ENCODE measurements at regions of chr4 and their contacts with region 1.

Region 1: GRCh38 chr4:183261953-183262775 is 57.9 kb downstream of the CLDN22 start:
- DNase-seq: no peak
- ATAC-seq: peak; percentile 73
- H3K4me3 Mint-ChIP-seq: no peak overlapping the region
- H3K27ac Mint-ChIP-seq: no peak overlapping the region
- H3K4me1 Mint-ChIP-seq: no peaks in the 10 kb centered on the region
- H3K27me3 Mint-ChIP-seq: peaks cover 6% of the 10 kb centered on the region
- CTCF ChIP-seq: peak; percentile 78

Region 2: GRCh38 chr4:182478475-182478874 is 783.7 kb before region 1 on chr4:
- CTCF ChIA-PET with region 1: interaction called, 3 read pairs
- POLR2A ChIA-PET with region 1: no interaction called
- intact Hi-C with region 1: loop called (anchors 1 kb)
- DNase-seq: no peak
- ATAC-seq: peak; percentile 50
- H3K4me3 Mint-ChIP-seq: no peak overlapping the region
- H3K27ac Mint-ChIP-seq: no peak overlapping the region
- H3K4me1 Mint-ChIP-seq: no peaks in the 10 kb centered on the region
- H3K27me3 Mint-ChIP-seq: peaks cover 4% of the 10 kb centered on the region
- CTCF ChIP-seq: peak; percentile 12

Region 3: GRCh38 chr4:182938205-182938645 is 323.9 kb before region 1 on chr4:
- CTCF ChIA-PET with region 1: interaction called, 29 read pairs
- POLR2A ChIA-PET with region 1: no interaction called
- intact Hi-C with region 1: loop called (anchors 1 kb)
- DNase-seq: peak; percentile 49
- ATAC-seq: peak; percentile 95
- H3K4me3 Mint-ChIP-seq: no peak overlapping the region
- H3K27ac Mint-ChIP-seq: no peak overlapping the region
- H3K4me1 Mint-ChIP-seq: peaks cover 5% of the 10 kb centered on the region
- H3K27me3 Mint-ChIP-seq: peaks cover 14% of the 10 kb centered on the region
- CTCF ChIP-seq: no peak

Region 4: DNA sequence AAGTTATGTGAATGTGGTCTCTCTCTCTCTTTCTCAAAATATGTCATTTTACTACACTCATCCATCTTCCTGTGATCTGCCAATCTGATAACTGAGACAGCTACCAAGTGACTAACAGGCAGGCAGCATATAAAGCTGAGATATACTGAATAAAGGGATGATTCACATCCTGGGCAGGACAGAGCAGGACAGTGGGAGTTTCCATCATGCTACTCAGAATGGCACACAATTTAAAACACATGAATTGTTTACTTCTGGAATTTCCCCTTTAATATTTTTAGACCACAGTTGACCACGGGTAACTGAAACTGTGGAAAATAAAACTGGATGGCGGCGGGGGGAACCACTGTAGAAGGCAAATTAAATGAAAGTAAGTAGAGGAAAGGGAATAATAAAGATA is 286.4 kb before region 1 on chr4:
- CTCF ChIA-PET with region 1: no interaction called
- POLR2A ChIA-PET with region 1: no interaction called
- intact Hi-C with region 1: no loop called
- DNase-seq: no peak
- ATAC-seq: no peak
- H3K4me3 Mint-ChIP-seq: no peak overlapping the region
- H3K27ac Mint-ChIP-seq: no peak overlapping the region
- H3K4me1 Mint-ChIP-seq: peaks cover 6% of the 10 kb centered on the region
- H3K27me3 Mint-ChIP-seq: peaks cover 2% of the 10 kb centered on the region
- CTCF ChIP-seq: no peak

Region 5: GRCh38 chr4:183074296-183074990 is 187.7 kb before region 1 on chr4:
- CTCF ChIA-PET with region 1: interaction called, 23 read pairs
- POLR2A ChIA-PET with region 1: no interaction called
- intact Hi-C with region 1: loop called (anchors 1 kb)
- DNase-seq: no peak
- ATAC-seq: no peak
- H3K4me3 Mint-ChIP-seq: no peak overlapping the region
- H3K27ac Mint-ChIP-seq: no peak overlapping the region
- H3K4me1 Mint-ChIP-seq: no peaks in the 10 kb centered on the region
- H3K27me3 Mint-ChIP-seq: peaks cover 7% of the 10 kb centered on the region
- CTCF ChIP-seq: no peak

Region 6: GRCh38 chr4:183398227-183399125 is 136.3 kb after region 1 on chr4:
- CTCF ChIA-PET with region 1: no interaction called
- POLR2A ChIA-PET with region 1: no interaction called
- intact Hi-C with region 1: loop called (anchors 2 kb)
- DNase-seq: peak; percentile 57
- ATAC-seq: peak; percentile 89
- H3K4me3 Mint-ChIP-seq: peak overlapping the region; percentile 82
- H3K27ac Mint-ChIP-seq: peak overlapping the region; percentile 82
- H3K4me1 Mint-ChIP-seq: peaks cover 25% of the 10 kb centered on the region
- H3K27me3 Mint-ChIP-seq: peaks cover 7% of the 10 kb centered on the region
- CTCF ChIP-seq: no peak

Region 7: DNA sequence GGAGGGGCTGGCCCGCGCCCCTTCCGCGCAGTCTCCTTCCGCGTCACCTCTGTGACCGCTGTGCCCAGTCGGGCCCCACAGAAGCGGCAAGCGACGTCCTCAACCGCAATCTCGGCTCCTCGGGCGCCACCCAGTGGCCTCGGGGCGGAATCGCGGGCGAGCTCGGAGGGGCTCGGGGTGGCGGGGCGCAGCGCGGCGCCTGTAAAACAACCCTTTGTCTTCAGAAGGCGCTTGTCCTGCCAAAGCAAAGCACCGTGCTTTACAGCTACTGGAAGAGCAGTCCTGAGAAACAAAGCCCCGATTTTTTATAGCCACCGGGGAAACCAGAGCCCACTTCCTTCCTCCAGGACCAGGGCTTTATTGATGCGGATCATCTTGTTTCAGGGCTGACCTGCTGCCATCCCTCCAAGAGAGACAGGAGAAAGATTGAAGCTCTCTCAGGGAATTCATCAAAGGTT is 145.0 kb after region 1 on chr4:
- CTCF ChIA-PET with region 1: no interaction called
- POLR2A ChIA-PET with region 1: no interaction called
- intact Hi-C with region 1: loop called (anchors 2 kb)
- DNase-seq: peak; percentile 90
- ATAC-seq: peak; percentile 99
- H3K4me3 Mint-ChIP-seq: peak overlapping the region; percentile 79
- H3K27ac Mint-ChIP-seq: peak overlapping the region; percentile 35
- H3K4me1 Mint-ChIP-seq: peaks cover 15% of the 10 kb centered on the region
- H3K27me3 Mint-ChIP-seq: no peaks in the 10 kb centered on the region
- CTCF ChIP-seq: no peak

Region 8: GRCh38 chr4:184310171-184310567 is 1048.0 kb after region 1 on chr4:
- CTCF ChIA-PET with region 1: no interaction called
- POLR2A ChIA-PET with region 1: no interaction called
- intact Hi-C with region 1: no loop called
- DNase-seq: no peak
- ATAC-seq: peak; percentile 23
- H3K4me3 Mint-ChIP-seq: no peak overlapping the region
- H3K27ac Mint-ChIP-seq: peak overlapping the region; percentile 51
- H3K4me1 Mint-ChIP-seq: peaks cover 61% of the 10 kb centered on the region
- H3K27me3 Mint-ChIP-seq: no peaks in the 10 kb centered on the region
- CTCF ChIP-seq: no peak

Measured in activated B cell treated with CpG ODN at 0.5 μM for 24 hours (primary cell).